ENCODE measurements at regions of chr19 and their contacts with region 1.

Region 1: GRCh38 chr19:41112728-41113290 is 1.4 kb upstream of the CYP2F1 start:
- H3K4me3 ChIP-seq: no peak overlapping the region
- H3K27ac ChIP-seq: no peak overlapping the region
- H3K4me1 ChIP-seq: no peaks in the 10 kb centered on the region
- CTCF ChIP-seq: no peak

Region 2: GRCh38 chr19:41123716-41124294 is 11.0 kb after region 1 on chr19:
- CTCF ChIA-PET with region 1: interaction called, 11 read pairs
- POLR2A ChIA-PET with region 1: no interaction called
- H3K4me3 ChIP-seq: no peak overlapping the region
- H3K27ac ChIP-seq: no peak overlapping the region
- H3K4me1 ChIP-seq: no peaks in the 10 kb centered on the region
- CTCF ChIP-seq: no peak

Region 3: GRCh38 chr19:41172297-41173164 is 59.7 kb after region 1 on chr19:
- CTCF ChIA-PET with region 1: no interaction called
- POLR2A ChIA-PET with region 1: no interaction called
- H3K4me3 ChIP-seq: no peak overlapping the region
- H3K27ac ChIP-seq: no peak overlapping the region
- H3K4me1 ChIP-seq: peaks cover 6% of the 10 kb centered on the region
- CTCF ChIP-seq: no peak

Region 4: GRCh38 chr19:41386442-41386841 is 273.6 kb after region 1 on chr19:
- CTCF ChIA-PET with region 1: no interaction called
- POLR2A ChIA-PET with region 1: no interaction called
- H3K4me3 ChIP-seq: no peak overlapping the region
- H3K27ac ChIP-seq: no peak overlapping the region
- H3K4me1 ChIP-seq: no peaks in the 10 kb centered on the region
- CTCF ChIP-seq: no peak